Panc1 (cell line): ENCODE measurements at regions of chr14 and their contacts with region 1.

Region 1: GRCh38 chr14:87081004-87081403 is 912.0 kb downstream of the GALC start:
- DNase-seq: no peak
- ATAC-seq: no peak
- H3K4me3 ChIP-seq: no peak overlapping the region
- H3K27ac ChIP-seq: no peak overlapping the region
- H3K4me1 ChIP-seq: no peaks in the 10 kb centered on the region
- H3K27me3 ChIP-seq: no peaks in the 10 kb centered on the region
- CTCF ChIP-seq: no peak

Region 2: DNA sequence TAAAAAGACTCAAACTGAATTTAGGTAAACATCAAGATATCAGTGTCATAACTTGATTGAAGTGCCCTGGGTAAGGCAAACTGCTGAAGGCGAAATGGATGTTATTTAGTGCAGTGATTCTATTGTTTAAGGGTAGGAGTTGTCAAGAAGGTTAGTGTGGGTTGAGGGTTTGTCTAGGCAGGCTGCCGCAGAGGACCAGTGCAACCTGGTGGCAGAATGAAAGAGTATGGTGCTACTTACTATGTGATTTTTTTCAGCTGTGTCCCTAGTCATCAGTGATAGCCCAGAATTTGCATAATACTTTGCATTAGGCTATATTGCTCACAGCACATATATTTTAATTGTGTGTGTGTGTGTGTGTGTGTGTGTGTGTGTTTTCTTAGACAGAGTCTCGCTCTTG is 215.1 kb before region 1 on chr14:
- CTCF ChIA-PET with region 1: no interaction called
- POLR2A ChIA-PET with region 1: no interaction called
- in situ Hi-C with region 1: no loop called
- intact Hi-C with region 1: no loop called
- DNase-seq: no peak
- ATAC-seq: no peak
- H3K4me3 ChIP-seq: no peak overlapping the region
- H3K27ac ChIP-seq: no peak overlapping the region
- H3K4me1 ChIP-seq: no peaks in the 10 kb centered on the region
- H3K27me3 ChIP-seq: no peaks in the 10 kb centered on the region
- CTCF ChIP-seq: no peak

Region 3: GRCh38 chr14:86961106-86961716 is 119.8 kb before region 1 on chr14:
- CTCF ChIA-PET with region 1: no interaction called
- POLR2A ChIA-PET with region 1: no interaction called
- in situ Hi-C with region 1: no loop called
- intact Hi-C with region 1: no loop called
- DNase-seq: no peak
- ATAC-seq: no peak
- H3K4me3 ChIP-seq: no peak overlapping the region
- H3K27ac ChIP-seq: no peak overlapping the region
- H3K4me1 ChIP-seq: no peaks in the 10 kb centered on the region
- H3K27me3 ChIP-seq: no peaks in the 10 kb centered on the region
- CTCF ChIP-seq: peak; percentile 12; the same call in 1 of the 2 replicates

Region 4: DNA sequence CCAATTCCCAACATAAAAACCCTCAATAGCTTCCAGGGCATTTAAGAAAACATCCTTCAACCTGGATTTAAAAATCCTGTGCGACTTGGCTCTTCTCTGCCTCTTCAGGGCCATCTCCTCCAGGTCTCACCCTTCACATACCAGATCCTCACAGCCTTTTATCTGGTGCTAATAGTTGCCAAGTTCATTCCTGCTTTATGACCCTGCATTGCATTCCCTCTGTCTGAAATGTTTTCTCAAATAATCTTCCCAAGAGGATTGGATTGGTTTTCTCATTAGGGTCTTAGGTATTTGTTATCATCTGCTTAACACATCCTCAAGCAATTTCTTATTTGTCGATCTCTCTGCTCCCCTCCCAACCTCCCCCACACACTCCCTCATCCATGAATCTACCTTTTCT is 80.0 kb after region 1 on chr14:
- CTCF ChIA-PET with region 1: no interaction called
- POLR2A ChIA-PET with region 1: interaction called, 12 read pairs
- in situ Hi-C with region 1: no loop called
- intact Hi-C with region 1: no loop called
- DNase-seq: no peak
- ATAC-seq: no peak
- H3K4me3 ChIP-seq: no peak overlapping the region
- H3K27ac ChIP-seq: no peak overlapping the region
- H3K4me1 ChIP-seq: no peaks in the 10 kb centered on the region
- H3K27me3 ChIP-seq: no peaks in the 10 kb centered on the region
- CTCF ChIP-seq: no peak